Left ventricle myocardium superior (tissue), 1 donor: ENCODE measurements at regions of chr2 and their contacts with region 1.

Region 1: GRCh38 chr2:157876066-157876787 is at the start of gene ACVR1:
- DNase-seq: peak; percentile 97
- ATAC-seq: peak; percentile 95
- total RNA-seq, gene ACVR1: 26.8 TPM

Region 2: DNA sequence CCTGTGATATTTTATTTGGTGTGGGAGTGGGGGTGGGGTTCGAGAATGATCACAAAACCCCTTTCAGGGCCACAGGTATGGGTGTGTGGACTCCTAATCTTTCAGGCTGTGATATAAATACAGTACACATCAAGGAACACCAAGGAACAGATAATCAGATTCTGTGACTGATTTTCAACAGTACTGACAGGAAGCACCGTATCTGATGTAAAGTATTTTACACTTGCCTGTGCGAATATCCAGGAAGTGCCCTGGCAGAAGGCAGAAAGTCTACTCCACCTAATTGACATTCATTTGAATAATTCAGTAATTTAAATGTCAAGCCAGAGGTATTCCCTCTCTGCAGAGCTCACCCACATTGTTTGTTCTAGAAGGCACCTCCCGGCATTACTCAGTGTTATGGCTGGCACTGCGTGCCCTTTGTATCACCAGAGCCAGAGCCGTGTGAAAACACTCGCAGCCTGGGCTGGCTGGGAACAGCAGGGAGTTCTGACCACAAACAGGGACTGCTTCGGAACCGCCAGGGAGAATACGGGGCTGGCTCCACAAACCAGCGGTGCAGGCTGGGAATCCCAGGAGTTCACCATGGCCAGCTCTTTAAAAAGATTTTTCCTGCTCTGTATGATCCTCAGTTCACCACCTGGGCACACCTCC is 91.9 kb before region 1 on chr2:
- intact Hi-C with region 1: loop called (anchors 10 kb)
- DNase-seq: peak; percentile 61
- ATAC-seq: peak; percentile 73

Region 3: DNA sequence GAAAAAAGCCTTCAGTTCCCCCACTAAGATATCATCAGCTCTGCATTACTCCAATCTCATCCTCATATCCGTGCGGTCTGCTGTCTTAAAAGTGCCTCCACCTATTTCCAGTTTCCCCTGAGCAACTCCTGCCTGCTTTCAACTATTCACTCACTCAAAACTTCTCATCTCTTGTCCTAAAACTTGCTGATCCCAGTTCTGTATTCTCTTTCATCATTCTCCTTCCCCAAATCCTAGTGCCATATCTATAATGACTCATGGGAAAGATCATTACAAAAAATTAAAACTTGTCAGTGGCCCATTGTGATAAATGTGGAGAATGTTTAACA is 20.1 kb before region 1 on chr2:
- intact Hi-C with region 1: no loop called
- DNase-seq: no peak
- ATAC-seq: no peak